ENCODE measurements at regions of chr22 and their contacts with region 1.

Region 1: DNA sequence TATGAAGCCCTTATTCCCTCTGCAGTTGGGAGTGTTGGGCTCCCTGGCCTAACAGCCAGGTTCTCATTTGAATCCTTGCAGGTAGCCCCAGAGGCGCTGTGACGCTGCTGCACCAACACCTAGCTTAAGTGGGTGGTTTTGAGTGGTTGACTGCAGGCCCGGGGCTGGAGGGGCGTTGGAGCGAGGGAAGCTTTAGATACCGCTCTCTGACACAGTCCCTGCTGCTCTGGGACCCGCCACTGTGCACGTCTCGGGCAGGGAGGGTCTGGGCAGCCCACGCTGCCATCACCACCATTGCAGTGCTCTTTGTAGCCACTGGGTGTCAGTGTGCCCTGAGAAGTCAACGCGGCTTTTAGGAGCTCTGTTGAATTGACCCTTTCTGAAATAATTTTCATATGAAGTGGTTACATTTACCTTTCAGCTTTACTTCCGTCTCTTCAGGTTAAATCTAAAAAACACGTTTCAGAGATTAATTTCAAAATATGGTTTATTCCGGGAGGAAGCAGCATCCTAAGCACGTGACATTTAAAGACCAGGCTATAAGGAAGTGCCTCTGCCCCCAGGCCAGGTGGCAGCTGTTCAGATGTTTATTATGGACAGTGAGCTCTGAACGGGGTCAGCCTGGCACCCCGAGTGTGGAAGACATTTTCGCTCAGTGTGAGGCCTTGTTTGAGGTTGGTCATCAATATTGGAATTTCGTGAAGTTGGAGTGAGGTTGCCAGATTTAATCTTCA is 30.9 kb upstream of the PARVB start:
- DNase-seq: peak; percentile 82
- ATAC-seq: peak; percentile 65
- H3K4me3 ChIP-seq: no peak overlapping the region
- H3K4me3 Mint-ChIP-seq: no peak overlapping the region
- H3K27ac ChIP-seq: peak overlapping the region in 1 of 2 donors; percentile 94
- H3K27ac Mint-ChIP-seq: peak overlapping the region; percentile 59
- H3K4me1 ChIP-seq: peaks cover 27 to 40% of the 10 kb centered on the region in 2 donors
- H3K4me1 Mint-ChIP-seq: peaks cover 46% of the 10 kb centered on the region
- H3K27me3 ChIP-seq: no peaks in the 10 kb centered on the region
- H3K27me3 Mint-ChIP-seq: no peaks in the 10 kb centered on the region
- CTCF ChIP-seq: peak; percentile 97

Region 2: DNA sequence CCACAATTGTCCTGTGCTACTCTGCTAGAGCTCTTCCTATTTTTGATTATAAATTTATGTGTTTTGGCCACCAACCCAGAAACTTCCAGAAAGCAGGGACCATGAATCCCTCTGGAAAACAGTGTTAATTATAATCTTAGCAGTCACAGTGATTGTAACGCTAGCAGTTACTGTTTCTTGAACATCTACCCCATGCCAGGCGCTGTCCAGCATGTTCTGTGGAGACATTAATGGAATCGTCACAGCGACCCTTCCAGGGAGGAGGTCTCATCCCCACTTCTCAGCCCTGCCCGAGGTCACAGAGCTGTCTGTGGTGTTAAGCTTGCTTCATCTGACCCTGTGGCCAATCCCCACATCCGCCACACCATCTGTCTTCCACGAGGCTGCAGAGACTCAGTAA is 87.5 kb before region 1 on chr22:
- CTCF ChIA-PET with region 1: no interaction called
- POLR2A ChIA-PET with region 1: no interaction called
- intact Hi-C with region 1: no loop called
- DNase-seq: no peak
- ATAC-seq: no peak
- H3K4me3 ChIP-seq: no peak overlapping the region
- H3K4me3 Mint-ChIP-seq: no peak overlapping the region
- H3K27ac ChIP-seq: no peak overlapping the region
- H3K27ac Mint-ChIP-seq: no peak overlapping the region
- H3K4me1 ChIP-seq: no peaks in the 10 kb centered on the region
- H3K4me1 Mint-ChIP-seq: no peaks in the 10 kb centered on the region
- H3K27me3 ChIP-seq: peaks cover 0 to 3% (median 0%) of the 10 kb centered on the region in 4 experiments
- H3K27me3 Mint-ChIP-seq: peaks cover 24% of the 10 kb centered on the region
- CTCF ChIP-seq: no peak

Region 3: DNA sequence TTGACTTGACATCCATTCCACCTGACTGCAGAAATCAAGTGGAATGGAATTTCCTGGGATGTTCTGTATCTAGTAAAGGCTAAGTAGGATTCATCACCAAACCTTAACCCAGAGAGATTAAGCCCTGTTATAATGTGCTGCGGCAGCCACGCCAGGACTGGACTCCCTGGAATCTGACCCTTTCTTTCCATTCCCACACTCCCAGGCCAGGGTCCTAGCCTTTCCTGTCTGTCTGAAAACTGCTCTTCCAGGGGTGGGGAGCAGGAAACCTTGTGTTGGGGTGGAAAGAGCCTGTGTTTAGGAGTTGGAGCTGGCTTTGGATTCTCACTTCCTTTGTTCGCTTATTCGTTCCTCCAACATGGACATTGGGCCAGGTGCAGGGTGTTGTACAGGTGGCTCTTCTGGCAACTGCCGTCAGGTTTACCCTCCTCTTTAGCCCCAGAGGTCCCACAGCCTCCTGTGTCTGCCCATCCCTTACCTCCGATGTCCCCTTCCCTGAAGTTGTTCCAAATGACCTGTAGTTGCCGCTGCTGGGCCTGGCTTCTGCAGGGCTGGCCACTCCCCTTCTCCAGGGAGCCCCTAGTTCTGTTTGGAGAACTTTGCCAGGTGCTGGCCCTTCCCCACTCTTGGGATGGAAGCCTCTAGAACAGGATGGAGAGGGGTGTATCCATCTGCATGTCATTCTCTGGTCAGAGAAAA is 10.4 kb after region 1 on chr22:
- CTCF ChIA-PET with region 1: interaction called, 31 read pairs
- POLR2A ChIA-PET with region 1: no interaction called
- intact Hi-C with region 1: no loop called
- DNase-seq: no peak
- ATAC-seq: no peak
- H3K4me3 ChIP-seq: no peak overlapping the region
- H3K4me3 Mint-ChIP-seq: no peak overlapping the region
- H3K27ac ChIP-seq: no peak overlapping the region
- H3K27ac Mint-ChIP-seq: no peak overlapping the region
- H3K4me1 ChIP-seq: peaks cover 10 to 19% of the 10 kb centered on the region in 2 donors
- H3K4me1 Mint-ChIP-seq: peaks cover 22% of the 10 kb centered on the region
- H3K27me3 ChIP-seq: no peaks in the 10 kb centered on the region
- H3K27me3 Mint-ChIP-seq: no peaks in the 10 kb centered on the region
- CTCF ChIP-seq: no peak

Region 4: GRCh38 chr22:44042249-44043218 is 49.3 kb after region 1 on chr22:
- CTCF ChIA-PET with region 1: interaction called, 10 read pairs
- POLR2A ChIA-PET with region 1: no interaction called
- intact Hi-C with region 1: no loop called
- DNase-seq: peak; percentile 76
- ATAC-seq: peak; percentile 92
- H3K4me3 ChIP-seq: no peak overlapping the region
- H3K4me3 Mint-ChIP-seq: peak overlapping the region; percentile 14
- H3K27ac ChIP-seq: peak overlapping the region; percentile 6 to 39
- H3K27ac Mint-ChIP-seq: peak overlapping the region; percentile 78
- H3K4me1 ChIP-seq: peaks cover 21 to 25% of the 10 kb centered on the region in 2 donors
- H3K4me1 Mint-ChIP-seq: peaks cover 57% of the 10 kb centered on the region
- H3K27me3 ChIP-seq: no peaks in the 10 kb centered on the region
- H3K27me3 Mint-ChIP-seq: no peaks in the 10 kb centered on the region
- CTCF ChIP-seq: no peak

Region 5: GRCh38 chr22:44074337-44074984 is 81.3 kb after region 1 on chr22:
- CTCF ChIA-PET with region 1: interaction called, 90 read pairs
- POLR2A ChIA-PET with region 1: no interaction called
- intact Hi-C with region 1: no loop called
- DNase-seq: no peak
- ATAC-seq: no peak
- H3K4me3 ChIP-seq: no peak overlapping the region
- H3K4me3 Mint-ChIP-seq: no peak overlapping the region
- H3K27ac ChIP-seq: no peak overlapping the region
- H3K27ac Mint-ChIP-seq: no peak overlapping the region
- H3K4me1 ChIP-seq: peaks cover under 1 to 8% of the 10 kb centered on the region in 2 donors
- H3K4me1 Mint-ChIP-seq: peaks cover 15% of the 10 kb centered on the region
- H3K27me3 ChIP-seq: no peaks in the 10 kb centered on the region
- H3K27me3 Mint-ChIP-seq: no peaks in the 10 kb centered on the region
- CTCF ChIP-seq: no peak

Region 6: DNA sequence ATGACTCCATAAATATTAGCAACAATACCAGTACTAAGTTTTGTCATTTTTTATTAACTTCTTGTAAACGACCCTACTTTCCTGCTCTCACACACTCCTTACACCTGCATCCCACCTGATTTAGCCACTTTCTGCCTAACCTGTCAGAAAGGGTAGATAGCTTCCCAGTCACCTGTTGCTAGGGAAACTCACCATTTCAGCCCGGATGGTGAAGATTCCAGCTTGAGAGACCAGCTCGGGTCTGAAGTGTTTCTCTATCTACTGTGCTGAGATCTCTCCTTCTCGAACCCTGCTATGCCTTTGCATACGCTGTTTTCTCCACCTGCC is 187.5 kb after region 1 on chr22 and contains the start of gene PARVG:
- CTCF ChIA-PET with region 1: interaction called, 22 read pairs
- POLR2A ChIA-PET with region 1: interaction called, 3 read pairs
- intact Hi-C with region 1: loop called (anchors 1 kb)
- DNase-seq: peak; percentile 86
- ATAC-seq: peak; percentile 67
- H3K4me3 ChIP-seq: peak within 1 kb of the TSS; percentile 70 to 98 (median 92)
- H3K4me3 Mint-ChIP-seq: peak within 1 kb of the TSS; percentile 94
- H3K27ac ChIP-seq: peak within 1 kb of the TSS; percentile 93 to 95
- H3K27ac Mint-ChIP-seq: peak within 1 kb of the TSS; percentile 95
- H3K4me1 ChIP-seq: peaks cover 19 to 39% of the 10 kb centered on the region in 2 donors
- H3K4me1 Mint-ChIP-seq: peaks cover 36% of the 10 kb centered on the region
- H3K27me3 ChIP-seq: no peaks in the 10 kb centered on the region
- H3K27me3 Mint-ChIP-seq: no peaks in the 10 kb centered on the region
- CTCF ChIP-seq: no peak
- total RNA-seq, gene PARVG: 247 and 271 TPM in 2 replicates